ENCODE measurements at regions of chr1 and their contacts with region 1.

Region 1: GRCh38 chr1:211133836-211134669 is at the start of gene KCNH1:
- DNase-seq: peak; percentile 91 to 95 (median 94)
- ATAC-seq: peak; percentile 100
- H3K4me3 ChIP-seq: 0 out of 2 replicates have a peak within 1 kb of the TSS, but pooled peaks have one; percentile 17
- H3K27ac ChIP-seq: no peak within 1 kb of the TSS
- H3K4me1 ChIP-seq: peaks cover 0 to 12% of the 10 kb centered on the region in 2 experiments; a peak in 2 of 5 replicates
- H3K27me3 ChIP-seq: peaks cover 8 to 12% of the 10 kb centered on the region in 2 experiments
- CTCF ChIP-seq: peak; percentile 96 to 98 (median 97)
- EP300 ChIP-seq: no peak
- POLR2A ChIP-seq: no peak
- RAD21 ChIP-seq: peak; percentile 98 to 99
- polyA plus RNA-seq, gene KCNH1: not detected

Region 2: DNA sequence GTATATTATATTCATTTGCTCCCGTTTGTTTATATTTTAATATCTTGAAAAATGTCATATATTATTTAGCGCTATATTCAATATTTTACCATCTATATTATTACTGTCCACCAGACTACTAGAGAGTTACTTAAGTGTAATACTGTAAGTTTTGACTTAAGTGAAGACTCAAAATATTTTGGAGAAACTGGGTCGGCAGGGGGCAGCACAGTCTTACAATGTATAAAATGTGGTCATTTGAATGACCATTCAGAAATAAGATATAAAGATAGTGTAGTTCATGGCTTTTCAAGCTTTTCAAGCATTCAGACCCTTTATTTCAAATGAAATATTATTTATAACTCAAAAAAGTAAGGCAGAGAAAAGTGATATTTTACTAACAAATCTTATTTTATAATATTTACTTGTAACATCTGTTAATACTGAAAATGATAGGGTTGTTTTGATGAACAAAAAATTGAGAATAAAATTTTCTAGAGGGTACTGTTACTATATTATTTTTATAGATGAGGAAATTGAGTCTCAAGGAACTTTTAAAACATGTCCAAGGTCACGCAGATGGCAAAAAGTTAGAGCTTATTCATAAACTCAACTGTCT is 990.5 kb before region 1 on chr1:
- CTCF ChIA-PET with region 1: interaction called, 3 read pairs
- POLR2A ChIA-PET with region 1: no interaction called
- in situ Hi-C with region 1: loop called (anchors 25 kb)
- intact Hi-C with region 1: loop called (anchors 2 kb)
- DNase-seq: peak; percentile 40 to 73 (median 45)
- ATAC-seq: peak; percentile 64
- H3K4me3 ChIP-seq: no peak overlapping the region
- H3K27ac ChIP-seq: no peak overlapping the region
- H3K4me1 ChIP-seq: no peaks in the 10 kb centered on the region
- H3K27me3 ChIP-seq: no peaks in the 10 kb centered on the region
- CTCF ChIP-seq: peak; percentile 47 to 75 (median 49); a peak in 4 of 6 replicates
- EP300 ChIP-seq: no peak
- POLR2A ChIP-seq: no peak
- RAD21 ChIP-seq: peak; percentile 81

Region 3: DNA sequence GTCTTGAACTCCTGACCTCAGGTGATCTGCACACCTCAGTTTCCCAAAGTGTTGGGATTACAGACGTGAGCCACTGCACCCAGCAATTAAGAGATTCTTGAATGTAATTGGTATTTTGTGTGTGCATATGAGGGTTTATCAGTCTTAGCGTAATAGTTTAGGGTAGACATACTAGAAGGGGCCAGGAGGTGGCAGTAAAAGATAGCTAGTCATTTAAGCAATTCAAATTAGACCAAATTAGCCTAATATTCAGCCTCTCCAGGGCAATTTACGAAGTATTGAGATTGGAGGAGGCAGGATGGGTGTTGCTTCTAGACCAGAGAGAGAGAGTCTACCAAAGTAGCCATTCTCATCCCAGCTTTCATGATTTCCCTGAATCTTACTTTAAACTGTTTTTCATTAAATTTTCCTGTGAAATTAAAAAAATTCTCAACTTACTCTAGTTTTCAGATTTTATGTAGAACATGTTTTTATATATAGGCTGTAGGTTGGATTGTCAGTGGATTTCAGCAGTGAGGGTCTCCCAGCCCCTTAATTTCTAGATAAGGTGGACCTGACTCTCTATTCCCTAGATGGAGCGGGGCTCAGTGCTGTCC is 685.7 kb before region 1 on chr1:
- CTCF ChIA-PET with region 1: interaction called, 18 read pairs
- POLR2A ChIA-PET with region 1: no interaction called
- in situ Hi-C with region 1: loop called (anchors 10 kb)
- intact Hi-C with region 1: loop called (anchors 1 kb)
- DNase-seq: peak; percentile 33 to 44 (median 41)
- ATAC-seq: peak; percentile 82
- H3K4me3 ChIP-seq: no peak overlapping the region
- H3K27ac ChIP-seq: no peak overlapping the region
- H3K4me1 ChIP-seq: no peaks in the 10 kb centered on the region
- H3K27me3 ChIP-seq: peaks cover 0 to 8% of the 10 kb centered on the region in 2 experiments; a peak in 3 of 5 replicates
- CTCF ChIP-seq: peak; percentile 42 to 73 (median 56); a peak in 5 of 6 replicates
- EP300 ChIP-seq: no peak
- POLR2A ChIP-seq: no peak
- RAD21 ChIP-seq: peak; percentile 88 to 89

Region 4: GRCh38 chr1:210505601-210506496 is 628.2 kb before region 1 on chr1:
- CTCF ChIA-PET with region 1: no interaction called
- POLR2A ChIA-PET with region 1: no interaction called
- in situ Hi-C with region 1: no loop called
- intact Hi-C with region 1: no loop called
- DNase-seq: no peak
- ATAC-seq: no peak
- H3K4me3 ChIP-seq: no peak overlapping the region
- H3K27ac ChIP-seq: no peak overlapping the region
- H3K4me1 ChIP-seq: no peaks in the 10 kb centered on the region
- H3K27me3 ChIP-seq: no peaks in the 10 kb centered on the region
- CTCF ChIP-seq: no peak
- EP300 ChIP-seq: no peak
- POLR2A ChIP-seq: no peak
- RAD21 ChIP-seq: no peak

Region 5: DNA sequence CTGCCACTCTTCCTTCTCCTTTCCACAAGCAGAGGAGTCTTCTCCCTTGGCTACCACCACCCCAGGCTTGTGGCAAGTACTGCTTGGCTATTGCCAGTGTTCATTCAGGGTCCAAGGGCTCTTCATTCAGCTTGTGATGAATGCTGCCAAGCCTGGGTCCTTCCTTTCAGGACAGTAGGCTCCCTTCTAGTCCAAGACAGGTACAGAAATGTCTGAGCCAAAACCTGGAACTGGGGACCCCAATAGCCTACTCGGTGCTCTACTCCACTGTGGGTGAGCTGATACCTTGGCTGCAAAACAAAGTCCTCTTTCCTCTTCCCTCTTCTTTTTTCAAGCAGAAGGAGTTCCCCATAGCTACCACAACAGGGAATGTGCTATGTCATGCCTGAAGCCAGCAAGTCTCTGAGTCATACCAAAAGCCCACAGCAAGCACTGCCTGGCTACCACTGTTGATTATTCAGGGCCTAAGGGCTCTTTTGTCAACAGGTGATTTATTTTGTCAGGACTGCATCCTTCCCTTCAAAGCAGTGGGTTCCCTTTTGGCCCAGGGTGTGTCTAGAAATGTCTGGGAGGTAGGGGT is 536.4 kb before region 1 on chr1:
- CTCF ChIA-PET with region 1: no interaction called
- POLR2A ChIA-PET with region 1: no interaction called
- in situ Hi-C with region 1: loop called (anchors 10 kb)
- intact Hi-C with region 1: no loop called
- DNase-seq: peak in 2 of 4 experiments; percentile 14 to 55
- ATAC-seq: peak; percentile 93
- H3K4me3 ChIP-seq: no peak overlapping the region
- H3K27ac ChIP-seq: peak overlapping the region; percentile 65; the same call in 2 of the 3 replicates
- H3K4me1 ChIP-seq: peaks cover 0 to 9% of the 10 kb centered on the region in 2 experiments; a peak in 2 of 5 replicates
- H3K27me3 ChIP-seq: no peaks in the 10 kb centered on the region
- CTCF ChIP-seq: no peak
- EP300 ChIP-seq: no peak
- POLR2A ChIP-seq: no peak
- RAD21 ChIP-seq: no peak

Region 6: DNA sequence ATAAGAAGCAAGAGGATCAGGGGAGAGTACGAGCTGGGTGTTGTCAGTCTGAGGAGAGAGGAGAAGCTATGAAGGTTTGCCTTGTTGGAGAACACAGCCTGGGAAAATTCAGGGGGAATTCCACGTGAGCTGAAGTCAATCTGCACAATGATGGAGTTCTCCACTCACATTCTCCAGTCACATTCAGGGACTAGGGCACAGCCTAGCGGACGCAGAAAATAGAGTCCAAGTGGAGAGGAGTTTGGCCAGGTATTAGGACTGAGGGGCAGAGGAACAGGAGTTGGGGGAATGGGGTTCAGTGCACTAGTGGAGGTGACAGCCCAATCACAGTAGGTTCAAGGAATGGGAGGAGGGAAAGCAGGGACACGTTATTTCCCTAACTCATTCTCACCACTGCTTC is 124.1 kb before region 1 on chr1:
- CTCF ChIA-PET with region 1: no interaction called
- POLR2A ChIA-PET with region 1: no interaction called
- in situ Hi-C with region 1: no loop called
- intact Hi-C with region 1: loop called (anchors 5 kb)
- DNase-seq: peak in 1 of 4 experiments; percentile 4
- ATAC-seq: peak; percentile 53; the same call in 1 of the 3 replicates
- H3K4me3 ChIP-seq: no peak overlapping the region
- H3K27ac ChIP-seq: no peak overlapping the region
- H3K4me1 ChIP-seq: no peaks in the 10 kb centered on the region
- H3K27me3 ChIP-seq: no peaks in the 10 kb centered on the region
- CTCF ChIP-seq: 0 out of 6 replicates have a peak, but pooled peaks of 2 of the 3 experiments have one; percentile 16 to 19
- EP300 ChIP-seq: no peak
- POLR2A ChIP-seq: no peak
- RAD21 ChIP-seq: peak in 1 of 2 experiments; percentile 17; a peak in 1 of 4 replicates

Region 7: GRCh38 chr1:211420389-211420788 is 286.3 kb after region 1 on chr1:
- CTCF ChIA-PET with region 1: no interaction called
- POLR2A ChIA-PET with region 1: no interaction called
- in situ Hi-C with region 1: no loop called
- intact Hi-C with region 1: no loop called
- DNase-seq: peak in 2 of 4 experiments; percentile 10 to 28
- ATAC-seq: peak; percentile 68
- H3K4me3 ChIP-seq: no peak overlapping the region
- H3K27ac ChIP-seq: no peak overlapping the region
- H3K4me1 ChIP-seq: no peaks in the 10 kb centered on the region
- H3K27me3 ChIP-seq: no peaks in the 10 kb centered on the region
- CTCF ChIP-seq: no peak; a peak in 1 of 6 replicates
- EP300 ChIP-seq: no peak
- POLR2A ChIP-seq: no peak
- RAD21 ChIP-seq: no peak

Region 8: GRCh38 chr1:211514030-211514754 is 380.1 kb after region 1 on chr1:
- CTCF ChIA-PET with region 1: no interaction called
- POLR2A ChIA-PET with region 1: no interaction called
- in situ Hi-C with region 1: no loop called
- intact Hi-C with region 1: loop called (anchors 5 kb)
- DNase-seq: peak; percentile 91 to 96 (median 92)
- ATAC-seq: peak; percentile 91
- H3K4me3 ChIP-seq: no peak overlapping the region
- H3K27ac ChIP-seq: no peak overlapping the region
- H3K4me1 ChIP-seq: peaks cover 15 to 30% of the 10 kb centered on the region in 2 experiments
- H3K27me3 ChIP-seq: no peaks in the 10 kb centered on the region
- CTCF ChIP-seq: peak; percentile 95 to 98 (median 97)
- EP300 ChIP-seq: peak; percentile 22; the same call in 1 of the 2 replicates
- POLR2A ChIP-seq: no peak
- RAD21 ChIP-seq: peak; percentile 95 to 97